Activated CD8-positive, alpha-beta T cell treated with anti-CD3 and anti-CD28 coated beads for 36 hours (primary cell): ENCODE measurements at regions of chr15 and their contacts with region 1.

Region 1: GRCh38 chr15:45429974-45430792 is 51.8 kb upstream of the GATM start:
- DNase-seq: peak; percentile 87
- ATAC-seq: peak; percentile 96
- H3K4me3 Mint-ChIP-seq: peak overlapping the region; percentile 38
- H3K27ac Mint-ChIP-seq: no peak overlapping the region
- H3K4me1 Mint-ChIP-seq: peaks cover 2% of the 10 kb centered on the region
- H3K27me3 Mint-ChIP-seq: peaks cover 9% of the 10 kb centered on the region
- CTCF ChIP-seq: peak; percentile 100

Region 2: GRCh38 chr15:45268135-45268534 is 162.0 kb before region 1 on chr15:
- CTCF ChIA-PET with region 1: no interaction called
- POLR2A ChIA-PET with region 1: no interaction called
- intact Hi-C with region 1: no loop called
- DNase-seq: peak; percentile 26
- ATAC-seq: no peak
- H3K4me3 Mint-ChIP-seq: no peak overlapping the region
- H3K27ac Mint-ChIP-seq: no peak overlapping the region
- H3K4me1 Mint-ChIP-seq: no peaks in the 10 kb centered on the region
- H3K27me3 Mint-ChIP-seq: no peaks in the 10 kb centered on the region
- CTCF ChIP-seq: no peak

Region 3: GRCh38 chr15:45414215-45414885 is 15.8 kb before region 1 on chr15:
- CTCF ChIA-PET with region 1: interaction called, 12 read pairs
- POLR2A ChIA-PET with region 1: no interaction called
- intact Hi-C with region 1: no loop called
- DNase-seq: no peak
- ATAC-seq: no peak
- H3K4me3 Mint-ChIP-seq: no peak overlapping the region
- H3K27ac Mint-ChIP-seq: peak overlapping the region; percentile 53
- H3K4me1 Mint-ChIP-seq: peaks cover 17% of the 10 kb centered on the region
- H3K27me3 Mint-ChIP-seq: no peaks in the 10 kb centered on the region
- CTCF ChIP-seq: no peak

Region 4: GRCh38 chr15:45442500-45443135 is 12.4 kb after region 1 on chr15:
- CTCF ChIA-PET with region 1: interaction called, 31 read pairs
- POLR2A ChIA-PET with region 1: no interaction called
- intact Hi-C with region 1: no loop called
- DNase-seq: no peak
- ATAC-seq: no peak
- H3K4me3 Mint-ChIP-seq: no peak overlapping the region
- H3K27ac Mint-ChIP-seq: no peak overlapping the region
- H3K4me1 Mint-ChIP-seq: no peaks in the 10 kb centered on the region
- H3K27me3 Mint-ChIP-seq: no peaks in the 10 kb centered on the region
- CTCF ChIP-seq: no peak

Region 5: GRCh38 chr15:45448066-45448510 is 17.9 kb after region 1 on chr15:
- CTCF ChIA-PET with region 1: interaction called, 31 read pairs
- POLR2A ChIA-PET with region 1: no interaction called
- intact Hi-C with region 1: no loop called
- DNase-seq: no peak
- ATAC-seq: no peak
- H3K4me3 Mint-ChIP-seq: no peak overlapping the region
- H3K27ac Mint-ChIP-seq: no peak overlapping the region
- H3K4me1 Mint-ChIP-seq: no peaks in the 10 kb centered on the region
- H3K27me3 Mint-ChIP-seq: no peaks in the 10 kb centered on the region
- CTCF ChIP-seq: no peak

Region 6: GRCh38 chr15:45616901-45617323 is 186.7 kb after region 1 on chr15:
- CTCF ChIA-PET with region 1: interaction called, 20 read pairs
- POLR2A ChIA-PET with region 1: no interaction called
- intact Hi-C with region 1: no loop called
- DNase-seq: no peak
- ATAC-seq: no peak
- H3K4me3 Mint-ChIP-seq: no peak overlapping the region
- H3K27ac Mint-ChIP-seq: no peak overlapping the region
- H3K4me1 Mint-ChIP-seq: no peaks in the 10 kb centered on the region
- H3K27me3 Mint-ChIP-seq: no peaks in the 10 kb centered on the region
- CTCF ChIP-seq: no peak